HepG2 (cell line): ENCODE measurements at regions of chr14 and their contacts with region 1.

Region 1: GRCh38 chr14:89040460-89041259 is 216.2 kb downstream of the TTC8 start:
- DNase-seq: peak; percentile 93
- ATAC-seq: peak; percentile 96
- H3K4me3 ChIP-seq: peak overlapping the region; percentile 51 to 76 (median 54)
- H3K27ac ChIP-seq: peak overlapping the region; percentile 100
- H3K4me1 ChIP-seq: peaks cover 28% of the 10 kb centered on the region
- H3K27me3 ChIP-seq: no peaks in the 10 kb centered on the region
- CTCF ChIP-seq: peak; percentile 96
- EP300 ChIP-seq: peak; percentile 86 to 87; a peak in 3 of 4 replicates
- POLR2A ChIP-seq: peak; percentile 58 to 94
- RAD21 ChIP-seq: peak; percentile 89

Region 2: DNA sequence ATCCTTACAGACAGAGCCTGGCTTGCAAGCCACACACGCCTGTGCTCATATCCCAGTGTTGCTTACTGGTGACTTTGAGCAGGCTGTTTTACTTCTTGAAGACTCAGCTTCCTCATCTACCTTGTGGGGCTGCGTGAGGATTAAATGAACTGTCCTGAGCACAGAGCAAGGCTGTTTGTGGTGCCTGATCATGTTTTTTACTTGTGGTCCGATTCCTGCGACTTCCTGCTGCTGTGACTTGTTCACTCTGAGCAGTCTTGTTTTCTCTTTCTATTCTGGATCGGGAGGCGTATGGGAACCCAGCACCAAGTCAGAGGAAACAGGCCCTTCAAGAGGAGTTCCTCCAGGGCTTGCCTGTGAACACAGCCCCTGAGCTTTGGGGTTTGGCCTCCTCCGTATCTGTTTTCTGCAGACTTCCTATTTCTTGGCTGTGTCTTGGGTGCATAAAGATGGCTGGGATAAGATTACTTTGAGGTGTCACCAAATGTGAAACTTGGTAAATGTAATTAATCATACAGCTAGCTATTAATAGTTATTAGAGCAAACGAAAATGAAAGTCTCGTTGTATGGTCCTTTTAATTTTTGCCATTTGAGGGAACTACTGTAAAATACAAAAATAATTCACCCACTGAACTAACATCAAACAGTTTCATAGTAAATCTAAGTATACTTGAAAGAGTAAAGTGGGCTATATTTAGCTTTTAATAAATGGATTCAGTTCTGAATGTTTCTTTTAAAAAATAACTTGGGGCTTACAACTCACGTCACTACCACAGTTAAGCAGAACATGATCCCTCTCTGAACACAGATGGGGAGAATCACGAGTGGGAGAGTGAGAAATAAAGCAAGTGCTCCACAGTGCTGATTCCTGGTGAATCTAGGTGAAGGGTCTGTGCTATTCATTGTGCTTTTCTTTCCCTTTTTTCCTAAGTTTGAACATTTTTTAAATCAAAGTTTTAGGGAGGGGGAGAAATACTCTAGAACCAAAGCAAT is 124.8 kb after region 1 on chr14:
- CTCF ChIA-PET with region 1: no interaction called
- POLR2A ChIA-PET with region 1: no interaction called
- in situ Hi-C with region 1: no loop called
- intact Hi-C with region 1: no loop called
- DNase-seq: no peak
- ATAC-seq: no peak
- H3K4me3 ChIP-seq: no peak overlapping the region
- H3K27ac ChIP-seq: no peak overlapping the region
- H3K4me1 ChIP-seq: peaks cover 16% of the 10 kb centered on the region
- H3K27me3 ChIP-seq: no peaks in the 10 kb centered on the region
- CTCF ChIP-seq: no peak
- EP300 ChIP-seq: no peak
- POLR2A ChIP-seq: no peak
- RAD21 ChIP-seq: no peak

Region 3: DNA sequence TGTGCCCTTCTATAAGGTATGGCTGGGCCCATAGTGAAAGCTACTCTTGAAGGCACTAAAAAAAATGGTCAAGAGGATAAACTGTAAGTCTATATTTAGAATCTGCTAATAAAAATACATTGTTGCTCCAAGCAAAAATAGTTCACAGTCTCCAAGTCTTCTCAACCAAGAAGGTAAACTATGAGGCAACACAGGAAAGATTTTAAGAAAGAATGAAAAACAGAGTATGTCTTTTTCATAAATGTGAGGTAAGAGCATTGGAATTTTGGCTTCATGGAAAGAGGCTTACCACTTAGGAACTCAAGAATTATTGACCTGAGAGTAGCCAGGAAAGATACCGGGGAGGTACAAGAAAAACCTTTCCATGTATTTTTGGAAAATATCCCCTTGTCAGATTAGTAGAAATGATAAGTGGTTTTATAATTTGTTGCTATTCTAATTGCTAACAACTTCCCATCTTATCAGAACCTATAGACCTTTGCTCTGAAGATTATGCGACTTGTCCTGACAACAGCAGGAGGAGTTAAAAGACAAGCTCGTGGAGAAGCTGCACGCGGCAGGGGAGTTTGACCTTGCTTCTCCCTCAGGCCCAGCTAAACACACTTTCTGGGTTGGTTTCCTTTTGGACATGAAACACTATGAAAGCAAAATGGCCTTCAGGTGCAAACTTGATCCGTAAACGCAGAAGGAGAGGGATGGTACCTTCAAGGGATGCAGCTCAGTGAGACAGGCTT is 138.3 kb after region 1 on chr14:
- CTCF ChIA-PET with region 1: interaction called, 3 read pairs
- POLR2A ChIA-PET with region 1: interaction called, 4 read pairs
- in situ Hi-C with region 1: no loop called
- intact Hi-C with region 1: loop called (anchors 5 kb)
- DNase-seq: no peak
- ATAC-seq: no peak
- H3K4me3 ChIP-seq: no peak overlapping the region
- H3K27ac ChIP-seq: no peak overlapping the region
- H3K4me1 ChIP-seq: peaks cover 19% of the 10 kb centered on the region
- H3K27me3 ChIP-seq: no peaks in the 10 kb centered on the region
- CTCF ChIP-seq: no peak
- EP300 ChIP-seq: no peak
- POLR2A ChIP-seq: no peak
- RAD21 ChIP-seq: no peak

Region 4: DNA sequence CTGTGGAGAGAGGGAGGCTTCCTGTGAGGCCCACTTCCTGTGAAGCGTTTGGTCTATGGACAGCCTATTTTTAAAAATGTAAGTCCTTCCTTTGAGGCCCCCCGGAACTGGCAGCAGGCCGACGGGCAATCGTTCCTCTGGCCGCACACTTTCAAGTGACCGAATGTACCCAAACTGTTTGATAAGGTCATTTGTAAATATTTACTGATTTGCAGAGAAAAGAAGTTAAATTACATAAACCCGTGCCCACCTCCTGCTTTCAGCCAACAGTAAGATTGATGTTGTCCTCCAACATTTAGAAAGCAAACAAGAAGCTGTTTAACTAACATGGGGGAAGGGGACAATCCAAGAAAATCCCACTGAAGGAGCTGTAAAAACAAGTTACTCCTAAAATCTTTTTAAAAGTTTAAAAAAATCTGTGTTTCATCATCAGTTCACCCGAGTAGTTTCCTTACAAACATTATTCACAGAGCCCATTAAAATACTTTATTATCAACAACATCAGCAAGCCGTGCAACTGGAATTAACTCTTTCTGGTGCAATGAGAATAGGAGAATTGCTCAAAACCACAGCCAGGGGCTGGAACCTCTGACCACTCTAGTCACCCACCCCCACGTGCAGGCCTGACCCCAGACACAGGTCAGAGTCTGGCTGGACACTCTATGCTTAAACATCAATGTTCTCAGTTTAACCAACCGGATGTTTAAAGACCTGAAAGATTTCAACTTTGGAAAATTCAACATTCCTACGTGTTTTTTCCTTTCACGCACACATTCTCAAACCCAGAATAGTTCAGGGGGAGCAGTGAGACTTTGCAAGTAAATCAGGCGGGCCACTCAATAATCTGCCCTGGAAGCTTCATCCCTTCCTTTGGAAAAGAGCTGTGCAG is 311.1 kb after region 1 on chr14:
- CTCF ChIA-PET with region 1: no interaction called
- POLR2A ChIA-PET with region 1: interaction called, 3 read pairs
- in situ Hi-C with region 1: no loop called
- intact Hi-C with region 1: loop called (anchors 2 kb)
- DNase-seq: peak; percentile 98
- ATAC-seq: peak; percentile 91
- H3K4me3 ChIP-seq: 0 out of 6 replicates have a peak overlapping the region, but pooled peaks of 1 of the 3 experiments have one; percentile 12
- H3K27ac ChIP-seq: peak overlapping the region; percentile 89
- H3K4me1 ChIP-seq: peaks cover 69% of the 10 kb centered on the region
- H3K27me3 ChIP-seq: no peaks in the 10 kb centered on the region
- CTCF ChIP-seq: no peak
- EP300 ChIP-seq: peak; percentile 82 to 98; a peak in 3 of 4 replicates
- POLR2A ChIP-seq: no peak
- RAD21 ChIP-seq: no peak

Region 5: DNA sequence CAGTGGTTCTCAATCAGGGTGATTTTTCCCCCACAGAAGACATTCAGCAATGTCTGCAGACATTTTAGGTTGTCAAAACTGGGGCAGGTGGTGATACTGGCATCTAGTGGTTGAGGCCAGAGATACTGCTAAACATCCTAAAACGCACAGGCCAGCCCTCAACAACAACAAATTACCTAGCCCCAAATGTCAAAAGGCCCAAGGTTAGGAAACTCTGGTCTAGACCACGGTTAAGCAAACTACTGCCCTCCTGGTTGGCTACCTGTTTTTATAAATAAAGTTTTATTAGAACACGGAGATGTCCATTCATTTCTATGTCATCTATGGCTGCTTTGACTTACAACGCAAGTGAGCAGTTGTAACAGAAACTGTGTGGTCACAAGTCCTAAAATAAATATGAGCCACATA is 727.2 kb after region 1 on chr14:
- CTCF ChIA-PET with region 1: no interaction called
- POLR2A ChIA-PET with region 1: interaction called, 3 read pairs
- in situ Hi-C with region 1: loop called (anchors 25 kb)
- intact Hi-C with region 1: loop called (anchors 5 kb)
- DNase-seq: peak; percentile 38
- ATAC-seq: peak; percentile 84
- H3K4me3 ChIP-seq: no peak overlapping the region
- H3K27ac ChIP-seq: no peak overlapping the region
- H3K4me1 ChIP-seq: peaks cover 33% of the 10 kb centered on the region
- H3K27me3 ChIP-seq: 0 out of 5 replicates have a peak, but pooled peaks cover 0 to 5% of the 10 kb centered on the region in 2 experiments
- CTCF ChIP-seq: peak; percentile 79
- EP300 ChIP-seq: no peak
- POLR2A ChIP-seq: no peak
- RAD21 ChIP-seq: peak; percentile 76

Region 6: GRCh38 chr14:89915114-89915878 is 874.6 kb after region 1 on chr14:
- CTCF ChIA-PET with region 1: interaction called, 7 read pairs
- POLR2A ChIA-PET with region 1: interaction called, 8 read pairs
- in situ Hi-C with region 1: loop called (anchors 5 kb)
- intact Hi-C with region 1: loop called (anchors 1 kb)
- DNase-seq: peak; percentile 59
- ATAC-seq: no peak
- H3K4me3 ChIP-seq: peak overlapping the region in 1 of 3 experiments; percentile 19; a peak in 1 of 6 replicates
- H3K27ac ChIP-seq: peak overlapping the region; percentile 28
- H3K4me1 ChIP-seq: peaks cover 38% of the 10 kb centered on the region
- H3K27me3 ChIP-seq: no peaks in the 10 kb centered on the region
- CTCF ChIP-seq: peak; percentile 82
- EP300 ChIP-seq: no peak
- POLR2A ChIP-seq: no peak
- RAD21 ChIP-seq: peak; percentile 74